Vagina (tissue), 2 donors: ENCODE measurements at regions of chr4 and their contacts with region 1.

Region 1: GRCh38 chr4:143653031-143653430 is 47.4 kb downstream of the FREM3 start:
- DNase-seq: no peak
- H3K4me3 ChIP-seq: no peak overlapping the region
- H3K27ac ChIP-seq: no peak overlapping the region
- H3K4me1 ChIP-seq: no peaks in the 10 kb centered on the region
- H3K27me3 ChIP-seq: no peaks in the 10 kb centered on the region
- CTCF ChIP-seq: no peak
- POLR2A ChIP-seq: no peak

Region 2: DNA sequence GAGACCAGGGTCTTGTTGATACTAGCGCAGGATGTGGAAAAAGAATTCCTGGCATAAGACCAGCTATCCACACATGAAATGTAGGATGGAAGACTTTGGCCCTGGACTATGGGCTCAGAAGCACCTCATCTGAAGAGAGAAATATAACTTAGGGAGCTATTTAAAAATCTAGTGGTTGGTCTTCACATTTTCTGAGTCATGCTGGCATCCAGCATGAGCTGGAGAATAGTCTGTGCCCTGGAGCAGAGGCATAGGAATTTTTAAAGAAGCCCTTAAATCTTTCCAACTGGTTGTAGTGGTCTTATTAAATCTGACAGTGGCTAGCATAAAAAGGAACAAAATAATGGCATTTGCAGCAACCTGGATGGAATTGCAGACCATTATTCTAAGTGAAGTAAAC is 53.2 kb before region 1 on chr4:
- intact Hi-C with region 1: loop called (anchors 1 kb)
- DNase-seq: no peak
- H3K4me3 ChIP-seq: no peak overlapping the region
- H3K27ac ChIP-seq: no peak overlapping the region
- H3K4me1 ChIP-seq: no peaks in the 10 kb centered on the region
- H3K27me3 ChIP-seq: no peaks in the 10 kb centered on the region
- CTCF ChIP-seq: no peak
- POLR2A ChIP-seq: no peak

Region 3: DNA sequence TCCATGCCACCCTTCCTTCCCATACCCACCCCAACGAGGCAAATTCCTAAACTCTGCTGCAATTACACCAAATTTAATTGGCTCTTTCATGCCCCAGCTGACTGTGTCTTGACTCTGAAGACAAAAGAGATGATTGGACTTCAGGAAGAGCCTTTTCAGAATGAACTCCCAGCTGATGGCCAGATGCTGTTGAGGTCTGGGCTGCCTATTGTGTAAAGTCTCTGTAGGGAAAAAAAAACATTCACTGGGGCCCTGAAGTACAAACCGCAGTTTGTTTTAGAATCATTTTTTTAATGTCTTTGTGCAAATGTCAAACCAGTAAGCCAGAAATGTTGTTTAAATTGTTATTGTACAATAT is 1167.7 kb after region 1 on chr4:
- intact Hi-C with region 1: no loop called
- DNase-seq: no peak
- H3K4me3 ChIP-seq: no peak overlapping the region
- H3K27ac ChIP-seq: no peak overlapping the region
- H3K4me1 ChIP-seq: no peaks in the 10 kb centered on the region
- H3K27me3 ChIP-seq: no peaks in the 10 kb centered on the region
- CTCF ChIP-seq: no peak
- POLR2A ChIP-seq: no peak